ENCODE measurements at regions of chr4 and their contacts with region 1.

Region 1: DNA sequence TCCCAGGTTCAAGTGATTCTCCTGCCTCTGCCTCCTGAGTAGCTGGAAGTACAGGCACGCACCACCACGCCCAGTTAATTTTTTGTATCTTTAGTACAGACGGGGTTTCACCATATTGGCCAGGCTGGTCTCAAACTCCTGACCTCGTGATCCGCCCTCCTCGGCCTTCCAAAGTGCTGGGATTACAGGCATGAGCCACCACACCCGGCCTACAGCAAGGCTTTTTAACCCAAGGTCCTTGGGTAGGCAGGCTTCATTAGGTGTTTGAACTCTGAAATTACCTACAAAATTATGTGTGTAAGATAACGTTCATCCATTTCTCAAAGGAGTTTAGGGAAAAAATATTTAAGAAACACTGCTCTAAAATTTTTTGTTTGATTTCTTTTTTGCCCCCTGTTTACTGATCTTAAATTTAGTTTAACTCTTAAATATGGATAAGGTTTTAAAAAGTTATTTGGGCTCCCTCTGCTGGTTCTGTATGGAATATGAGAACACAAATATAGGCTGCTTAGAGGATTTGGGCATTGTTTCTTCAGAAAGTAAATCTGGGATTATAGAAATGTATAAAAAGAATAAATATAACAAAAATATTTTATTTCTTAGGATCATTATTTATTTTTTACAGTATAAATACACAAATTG is 92.8 kb downstream of the CBR4 start:
- DNase-seq: peak; percentile 42
- H3K4me3 ChIP-seq: no peak overlapping the region
- H3K27ac ChIP-seq: no peak overlapping the region; a peak in 1 of 4 replicates
- H3K4me1 ChIP-seq: peaks cover 0 to 18% of the 10 kb centered on the region in 2 experiments; a peak in 2 of 4 replicates
- H3K27me3 ChIP-seq: no peaks in the 10 kb centered on the region
- CTCF ChIP-seq: peak; percentile 72
- EP300 ChIP-seq: no peak
- RAD21 ChIP-seq: peak; percentile 73

Region 2: GRCh38 chr4:168183717-168184608 is 733.3 kb before region 1 on chr4:
- CTCF ChIA-PET with region 1: interaction called, 11 read pairs
- POLR2A ChIA-PET with region 1: interaction called, 3 read pairs
- DNase-seq: peak; percentile 49
- H3K4me3 ChIP-seq: no peak overlapping the region
- H3K27ac ChIP-seq: no peak overlapping the region
- H3K4me1 ChIP-seq: no peaks in the 10 kb centered on the region
- H3K27me3 ChIP-seq: no peaks in the 10 kb centered on the region
- CTCF ChIP-seq: peak; percentile 85
- EP300 ChIP-seq: no peak
- RAD21 ChIP-seq: peak; percentile 84

Region 3: GRCh38 chr4:168831919-168832762 is 85.1 kb before region 1 on chr4:
- CTCF ChIA-PET with region 1: interaction called, 61 read pairs
- POLR2A ChIA-PET with region 1: interaction called, 5 read pairs
- DNase-seq: peak; percentile 86
- H3K4me3 ChIP-seq: peak overlapping the region; percentile 82 to 93
- H3K27ac ChIP-seq: peak overlapping the region; percentile 80 to 90
- H3K4me1 ChIP-seq: peaks cover 10 to 13% of the 10 kb centered on the region in 2 experiments; a peak in 3 of 4 replicates
- H3K27me3 ChIP-seq: no peaks in the 10 kb centered on the region
- CTCF ChIP-seq: no peak
- EP300 ChIP-seq: no peak; a peak in 1 of 4 replicates
- RAD21 ChIP-seq: no peak

Measured in SK-N-SH (cell line).